ENCODE measurements at regions of chr15 and their contacts with region 1.

Region 1: DNA sequence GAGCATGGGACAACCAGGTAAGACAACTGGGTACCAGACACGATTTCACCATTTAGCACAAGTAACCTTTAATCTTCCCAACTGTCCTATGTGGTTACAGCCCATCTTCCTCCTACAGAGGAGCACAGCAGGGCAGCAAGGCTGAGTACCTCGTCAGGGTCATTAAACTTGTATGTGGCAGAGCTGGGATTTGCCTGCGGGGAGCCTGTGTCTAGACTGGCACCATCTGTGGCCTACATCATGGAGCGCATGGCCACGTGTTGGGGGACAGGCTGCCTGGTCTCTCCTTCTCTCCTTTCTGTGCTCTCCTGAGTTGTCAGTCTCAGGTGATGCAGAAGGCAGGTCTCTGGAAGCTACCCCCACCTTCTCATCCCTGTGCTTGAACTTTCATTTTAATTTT is 32.2 kb downstream of the GOLGA6A start:
- DNase-seq: no peak
- ATAC-seq: no peak
- H3K4me3 Mint-ChIP-seq: no peak overlapping the region
- H3K27ac Mint-ChIP-seq: no peak overlapping the region
- H3K4me1 Mint-ChIP-seq: peaks cover 20% of the 10 kb centered on the region
- H3K27me3 Mint-ChIP-seq: no peaks in the 10 kb centered on the region
- CTCF ChIP-seq: no peak

Region 2: GRCh38 chr15:73838831-73839426 is 211.2 kb before region 1 on chr15:
- CTCF ChIA-PET with region 1: no interaction called
- POLR2A ChIA-PET with region 1: no interaction called
- intact Hi-C with region 1: no loop called
- DNase-seq: no peak
- ATAC-seq: no peak
- H3K4me3 Mint-ChIP-seq: no peak overlapping the region
- H3K27ac Mint-ChIP-seq: no peak overlapping the region
- H3K4me1 Mint-ChIP-seq: no peaks in the 10 kb centered on the region
- H3K27me3 Mint-ChIP-seq: peaks cover 15% of the 10 kb centered on the region
- CTCF ChIP-seq: no peak

Region 3: DNA sequence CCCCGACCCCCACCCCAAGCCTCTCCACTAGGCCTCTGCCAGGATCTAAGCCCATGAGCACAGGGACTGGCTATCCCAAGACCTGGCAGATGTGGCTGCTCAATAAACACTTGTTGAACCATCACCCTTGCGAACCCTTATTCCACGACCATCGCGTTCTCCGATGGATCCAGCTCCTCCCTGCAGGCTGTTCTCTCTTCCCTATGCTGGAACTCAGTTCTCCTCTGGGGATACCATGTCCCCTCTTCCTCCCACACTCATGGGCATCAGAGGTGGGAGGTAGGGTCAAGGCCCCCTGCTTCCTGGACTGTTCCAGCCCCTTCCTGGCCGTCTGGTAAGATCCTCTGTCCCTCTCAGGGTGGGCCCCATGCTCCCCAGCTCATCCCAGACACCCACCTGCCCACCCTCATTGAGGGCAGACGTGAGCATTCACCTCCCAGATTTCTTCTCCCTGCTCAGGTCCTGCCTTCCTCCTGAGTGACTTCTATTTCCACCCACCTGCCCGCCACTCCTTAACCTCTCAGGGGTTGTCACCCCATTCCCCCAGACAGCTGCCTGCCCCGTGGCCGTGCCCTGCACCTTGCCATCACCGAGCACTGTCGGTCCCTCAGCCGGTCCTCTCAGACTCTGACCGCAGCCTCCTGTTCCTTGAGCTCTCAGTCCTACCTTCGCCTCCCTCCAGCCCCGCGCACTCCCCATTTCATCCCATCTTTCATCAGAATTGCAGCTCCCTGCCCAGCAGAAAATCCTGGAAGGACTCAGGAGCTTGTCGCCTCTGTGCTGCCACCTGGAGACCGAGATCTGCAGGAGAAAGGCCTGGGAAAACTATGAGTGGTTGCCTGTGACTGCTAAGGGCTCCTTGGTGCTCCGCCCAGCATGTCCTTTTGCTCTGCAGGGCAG is 13.6 kb before region 1 on chr15:
- CTCF ChIA-PET with region 1: interaction called, 15 read pairs
- POLR2A ChIA-PET with region 1: no interaction called
- intact Hi-C with region 1: no loop called
- DNase-seq: no peak
- ATAC-seq: no peak
- H3K4me3 Mint-ChIP-seq: no peak overlapping the region
- H3K27ac Mint-ChIP-seq: no peak overlapping the region
- H3K4me1 Mint-ChIP-seq: no peaks in the 10 kb centered on the region
- H3K27me3 Mint-ChIP-seq: no peaks in the 10 kb centered on the region
- CTCF ChIP-seq: no peak

Measured in activated B cell treated with CpG ODN at 0.5 μM for 24 hours (primary cell).